Colonic mucosa (tissue), 4 donors: ENCODE measurements at regions of chr20 and their contacts with region 1.

Region 1: GRCh38 chr20:3051385-3052019 is 5.7 kb downstream of the MRPS26 start:
- DNase-seq: no peak
- H3K4me3 ChIP-seq: no peak overlapping the region
- H3K27ac ChIP-seq: no peak overlapping the region
- H3K4me1 ChIP-seq: peaks cover 6% of the 10 kb centered on the region
- H3K27me3 ChIP-seq: no peaks in the 10 kb centered on the region
- CTCF ChIP-seq: no peak

Region 2: GRCh38 chr20:2713285-2713684 is 338.2 kb before region 1 on chr20:
- intact Hi-C with region 1: no loop called
- DNase-seq: no peak
- H3K4me3 ChIP-seq: no peak overlapping the region
- H3K27ac ChIP-seq: no peak overlapping the region
- H3K4me1 ChIP-seq: no peaks in the 10 kb centered on the region
- H3K27me3 ChIP-seq: no peaks in the 10 kb centered on the region
- CTCF ChIP-seq: no peak

Region 3: DNA sequence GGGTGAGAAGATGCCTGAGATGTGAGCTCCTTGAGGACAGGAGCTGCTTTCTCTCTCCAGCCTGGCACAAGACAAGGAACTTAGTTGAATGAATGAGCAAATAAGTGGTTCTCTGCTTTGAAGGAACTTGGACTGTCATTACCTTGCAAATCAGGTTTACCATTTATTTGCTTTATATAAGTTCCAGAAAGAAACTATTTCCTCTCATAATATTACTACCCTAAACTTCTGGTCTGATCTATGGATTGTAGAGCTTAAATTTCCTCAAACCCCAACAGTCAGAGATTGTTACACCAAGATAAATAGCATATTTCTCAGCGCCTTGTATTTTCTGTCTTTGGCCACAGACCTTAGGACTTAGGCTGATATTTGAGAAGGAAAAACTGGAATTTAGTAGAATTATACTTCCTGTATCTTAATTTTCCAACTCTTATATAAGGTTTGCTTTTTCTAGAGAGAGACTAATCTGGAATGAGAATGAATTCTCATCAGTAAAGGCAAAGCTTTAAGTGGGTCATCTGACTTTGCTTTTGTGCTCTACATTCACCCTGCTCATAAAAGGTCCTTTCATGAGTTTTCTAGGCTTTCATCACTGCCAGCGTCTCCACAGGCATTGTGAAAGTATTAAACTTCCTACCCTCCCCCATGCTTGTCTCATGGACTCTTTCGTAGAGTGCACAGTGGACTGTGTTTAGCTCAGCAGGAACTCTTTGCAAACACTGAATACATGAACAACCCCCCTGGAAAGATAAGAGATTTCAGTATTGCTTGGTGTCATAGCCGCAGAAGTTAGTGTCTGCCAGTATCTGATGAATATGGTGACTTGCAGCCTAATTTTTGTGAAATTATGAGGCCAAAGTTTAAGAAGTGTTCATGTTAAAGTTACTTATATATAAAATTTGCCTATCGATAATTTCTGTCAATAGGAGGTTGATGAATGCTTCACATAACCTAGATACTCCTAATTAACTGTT is 104.2 kb before region 1 on chr20:
- intact Hi-C with region 1: no loop called
- DNase-seq: no peak
- H3K4me3 ChIP-seq: no peak overlapping the region
- H3K27ac ChIP-seq: no peak overlapping the region
- H3K4me1 ChIP-seq: no peaks in the 10 kb centered on the region
- H3K27me3 ChIP-seq: no peaks in the 10 kb centered on the region
- CTCF ChIP-seq: no peak

Region 4: DNA sequence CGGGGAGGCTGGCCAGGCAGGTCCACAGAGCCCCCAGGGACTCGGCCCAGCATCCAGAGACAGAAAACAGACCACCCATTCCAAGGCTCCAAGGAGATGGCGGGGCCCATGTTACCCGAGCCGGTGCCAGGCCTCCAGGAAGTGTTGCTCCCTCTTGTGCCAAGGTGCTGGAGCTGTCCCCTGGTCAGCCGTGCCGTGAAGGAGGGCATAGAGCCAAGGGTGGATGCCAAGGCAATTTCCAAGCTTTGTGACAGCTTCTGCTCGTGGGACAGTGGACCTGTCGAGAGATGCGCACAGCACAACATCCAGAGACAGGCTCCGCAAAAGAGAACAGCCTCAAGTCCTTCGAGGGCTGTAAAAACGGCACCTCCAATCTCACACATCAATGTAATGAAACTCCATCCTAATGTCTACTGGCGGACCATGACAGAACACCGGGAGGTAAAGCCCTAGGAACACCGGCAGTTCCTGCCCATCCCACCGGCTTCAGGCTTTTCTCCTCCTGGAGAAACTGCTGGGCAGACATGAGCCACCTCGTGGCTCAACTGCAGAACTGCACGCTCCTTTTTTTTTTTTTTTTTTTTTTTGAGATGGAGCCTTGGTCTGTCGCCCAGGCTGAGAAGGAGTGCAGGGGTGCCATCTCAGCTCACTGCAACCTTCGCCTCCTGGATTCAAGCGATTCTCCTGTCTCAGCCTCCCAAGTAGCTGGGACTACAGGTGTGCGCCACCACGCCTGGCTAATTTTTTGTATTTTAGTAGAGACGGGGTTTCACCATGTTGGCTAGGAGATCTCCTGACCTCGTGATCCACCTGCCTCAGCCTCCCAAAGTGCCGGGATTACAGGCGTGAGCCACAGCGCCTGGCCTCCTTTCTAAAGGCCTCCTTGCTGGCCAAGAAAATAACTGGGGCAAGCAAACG is 63.9 kb after region 1 on chr20:
- intact Hi-C with region 1: loop called (anchors 5 kb)
- DNase-seq: no peak
- H3K4me3 ChIP-seq: no peak overlapping the region
- H3K27ac ChIP-seq: no peak overlapping the region
- H3K4me1 ChIP-seq: no peaks in the 10 kb centered on the region
- H3K27me3 ChIP-seq: no peaks in the 10 kb centered on the region
- CTCF ChIP-seq: peak; percentile 83

Region 5: GRCh38 chr20:3313683-3314065 is 262.2 kb after region 1 on chr20:
- intact Hi-C with region 1: loop called (anchors 2 kb)
- DNase-seq: no peak
- H3K4me3 ChIP-seq: no peak overlapping the region
- H3K27ac ChIP-seq: no peak overlapping the region
- H3K4me1 ChIP-seq: no peaks in the 10 kb centered on the region
- H3K27me3 ChIP-seq: no peaks in the 10 kb centered on the region
- CTCF ChIP-seq: no peak

Region 6: DNA sequence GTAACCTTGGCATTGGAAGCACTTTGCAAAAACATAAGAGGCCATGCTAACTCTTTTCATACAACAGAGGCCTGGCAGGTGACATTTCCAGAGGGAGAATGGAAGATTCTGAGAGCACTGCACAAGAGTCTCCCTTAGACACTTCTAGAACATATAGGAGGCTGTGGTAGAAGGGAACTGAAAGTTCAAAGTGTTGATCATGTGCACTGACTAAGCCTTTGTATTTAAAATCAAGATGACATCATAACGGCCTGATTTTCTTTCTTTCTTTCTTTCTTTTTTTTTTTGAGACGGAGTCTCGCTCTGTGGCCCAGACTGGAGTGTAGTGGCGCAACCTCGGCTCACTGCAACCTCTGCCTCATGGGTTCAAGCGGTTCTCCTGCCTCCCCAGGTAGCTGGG is 382.7 kb after region 1 on chr20:
- intact Hi-C with region 1: no loop called
- DNase-seq: no peak
- H3K4me3 ChIP-seq: no peak overlapping the region
- H3K27ac ChIP-seq: no peak overlapping the region
- H3K4me1 ChIP-seq: peaks cover 5% of the 10 kb centered on the region
- H3K27me3 ChIP-seq: peaks cover 21% of the 10 kb centered on the region
- CTCF ChIP-seq: no peak

Region 7: GRCh38 chr20:4136078-4136966 is 1084.8 kb after region 1 on chr20:
- intact Hi-C with region 1: no loop called
- DNase-seq: no peak
- H3K4me3 ChIP-seq: no peak overlapping the region
- H3K27ac ChIP-seq: no peak overlapping the region
- H3K4me1 ChIP-seq: no peaks in the 10 kb centered on the region
- H3K27me3 ChIP-seq: no peaks in the 10 kb centered on the region
- CTCF ChIP-seq: no peak